HCT116 (cell line): ENCODE measurements at regions of chr13 and their contacts with region 1.

Region 1: DNA sequence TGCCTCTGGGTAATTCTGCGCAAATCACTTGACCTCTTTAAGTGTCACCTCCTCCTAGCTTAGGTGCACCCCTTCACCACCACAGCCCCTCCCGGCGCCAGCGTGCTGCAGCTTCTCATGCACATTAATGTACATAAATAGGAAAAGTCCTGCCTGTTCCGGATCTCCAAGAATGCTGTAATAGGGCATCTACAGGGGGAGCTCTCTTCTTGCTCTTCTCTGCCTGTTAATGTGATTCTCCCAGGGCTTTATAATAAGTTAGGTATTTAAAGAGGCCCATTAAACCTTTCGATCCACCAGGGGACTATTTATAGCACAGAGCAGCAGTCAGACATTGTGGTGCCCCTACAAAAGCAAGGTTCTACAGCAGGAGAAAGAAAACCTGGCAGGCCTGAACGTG is 35.3 kb downstream of the SOX1 start:
- DNase-seq: peak; percentile 7
- ATAC-seq: peak; percentile 73
- H3K4me3 ChIP-seq: no peak overlapping the region
- H3K27ac ChIP-seq: no peak overlapping the region
- H3K4me1 ChIP-seq: no peaks in the 10 kb centered on the region; a peak in 2 of 4 replicates
- H3K27me3 ChIP-seq: 0 out of 2 replicates have a peak, but pooled peaks cover 6% of the 10 kb centered on the region
- CTCF ChIP-seq: peak in 2 of 3 experiments; percentile 26 to 30; a peak in 4 of 6 replicates
- POLR2A ChIP-seq: no peak
- RAD21 ChIP-seq: peak; percentile 56

Region 2: DNA sequence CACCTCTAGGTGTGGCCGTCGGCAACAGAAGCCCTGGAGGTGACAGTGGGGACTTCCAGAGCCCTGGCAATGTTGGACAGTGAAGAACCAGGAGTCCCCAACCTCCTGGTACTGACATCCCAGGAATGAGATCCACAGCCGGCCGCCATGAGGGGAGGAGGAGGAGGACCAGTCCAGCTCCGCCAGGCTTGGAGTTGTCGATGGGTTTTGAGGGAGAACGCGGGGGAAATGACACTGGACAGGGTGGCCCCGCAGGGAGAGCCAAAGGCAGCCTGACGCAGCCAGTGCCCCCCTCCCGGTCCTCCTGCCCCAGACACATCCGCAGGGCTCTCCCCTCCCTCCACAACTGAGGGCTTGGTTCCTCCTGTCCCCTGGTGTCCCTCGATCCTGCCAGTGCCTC is 331.8 kb after region 1 on chr13:
- CTCF ChIA-PET with region 1: no interaction called
- POLR2A ChIA-PET with region 1: no interaction called
- RAD21 ChIA-PET with region 1: no interaction called
- intact Hi-C with region 1: loop called (anchors 10 kb)
- DNase-seq: no peak
- ATAC-seq: no peak
- H3K4me3 ChIP-seq: no peak overlapping the region
- H3K27ac ChIP-seq: no peak overlapping the region
- H3K4me1 ChIP-seq: no peaks in the 10 kb centered on the region
- H3K27me3 ChIP-seq: peaks cover 6% of the 10 kb centered on the region; the same call in 1 of the 2 replicates
- CTCF ChIP-seq: no peak
- POLR2A ChIP-seq: no peak
- RAD21 ChIP-seq: no peak

Region 3: DNA sequence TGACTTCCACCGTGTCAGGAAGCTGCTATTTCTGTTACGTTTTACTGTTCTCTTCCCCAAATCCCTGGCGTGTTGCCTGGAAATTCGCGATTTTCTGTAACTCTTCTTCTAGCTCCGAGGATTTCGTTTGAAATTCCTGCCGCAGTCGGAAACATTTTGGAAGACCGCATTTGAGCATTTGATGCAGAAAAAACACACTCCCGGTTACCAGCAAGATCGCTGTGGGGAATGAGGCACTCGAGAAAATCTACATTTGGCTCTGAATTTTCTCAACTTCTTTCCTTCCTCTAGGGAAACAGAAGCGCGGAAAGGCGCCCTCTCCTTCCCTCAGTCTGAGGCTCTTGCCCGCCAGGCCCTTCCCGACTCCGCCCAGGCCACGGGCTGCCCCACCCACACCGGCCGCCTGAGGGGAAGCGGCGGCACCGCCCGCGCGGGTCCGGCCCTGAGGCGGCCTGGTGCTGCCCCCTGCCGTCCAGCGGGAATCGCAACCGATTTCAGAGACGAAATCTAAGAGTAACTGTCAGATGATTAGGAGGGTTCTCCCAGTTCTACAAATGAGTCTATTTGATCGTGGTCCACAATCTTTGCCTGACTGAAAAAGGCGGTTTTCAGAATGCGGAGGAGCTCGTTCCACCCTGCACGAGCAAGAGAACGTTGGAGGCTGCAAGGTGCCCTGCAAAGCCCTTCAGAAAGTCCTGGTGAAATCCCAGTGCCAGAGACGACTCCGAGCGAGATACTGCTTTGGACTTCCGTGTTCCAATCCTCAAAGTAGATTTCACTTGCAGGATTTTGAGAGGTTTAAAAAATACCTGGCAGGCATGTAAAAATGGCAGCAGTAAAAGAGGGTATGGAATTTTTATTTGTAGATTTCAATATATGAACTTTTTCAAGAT is 504.1 kb after region 1 on chr13:
- CTCF ChIA-PET with region 1: no interaction called
- POLR2A ChIA-PET with region 1: no interaction called
- RAD21 ChIA-PET with region 1: no interaction called
- intact Hi-C with region 1: loop called (anchors 2 kb)
- DNase-seq: peak; percentile 65
- ATAC-seq: peak; percentile 100
- H3K4me3 ChIP-seq: peak overlapping the region; percentile 40 to 49
- H3K27ac ChIP-seq: no peak overlapping the region
- H3K4me1 ChIP-seq: peaks cover 0 to 9% of the 10 kb centered on the region in 2 experiments; a peak in 2 of 4 replicates
- H3K27me3 ChIP-seq: peaks cover 10% of the 10 kb centered on the region; the same call in 1 of the 2 replicates
- CTCF ChIP-seq: peak; percentile 80 to 94 (median 92)
- POLR2A ChIP-seq: no peak
- RAD21 ChIP-seq: peak; percentile 95